Heart right ventricle (tissue), 16 donors: ENCODE measurements at regions of chr1 and their contacts with region 1.

Region 1: DNA sequence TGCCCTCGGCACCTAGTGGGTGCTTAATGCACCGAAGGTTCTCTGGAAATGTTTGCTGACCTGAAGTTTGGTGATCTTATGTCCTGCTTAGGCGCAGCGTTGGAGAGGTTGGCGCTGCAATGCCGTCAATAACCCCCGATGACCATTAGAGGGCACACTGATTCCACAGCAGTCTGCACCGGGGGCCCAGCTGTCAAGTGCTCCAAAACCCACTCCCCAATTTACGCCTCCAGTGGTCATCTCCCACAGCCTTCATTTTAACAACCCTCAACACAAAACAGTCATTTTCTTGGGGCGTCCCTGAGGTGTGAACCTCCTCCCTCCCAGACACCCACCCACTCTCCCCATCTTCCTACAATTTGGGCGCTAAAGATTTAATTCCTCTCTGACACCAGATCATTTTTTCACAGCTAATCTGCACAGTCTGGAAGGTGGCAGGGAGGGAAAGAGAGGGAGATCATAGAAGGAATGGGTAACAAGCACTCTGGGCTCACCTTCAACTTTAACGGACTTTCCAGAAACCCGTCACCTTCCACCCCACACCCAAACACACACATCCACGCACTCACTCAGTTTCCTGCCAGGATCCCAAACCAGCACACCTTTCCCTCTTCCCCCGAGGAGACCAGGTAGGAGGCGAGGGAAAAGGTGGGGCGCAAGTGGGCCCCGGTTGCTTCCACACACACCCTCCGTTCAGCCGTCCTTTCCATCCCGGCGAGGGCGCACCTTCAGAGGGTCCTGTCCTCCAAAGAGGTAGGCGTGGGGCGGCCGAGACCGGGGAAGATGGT is 576 bp upstream of the NPR1 start:
- DNase-seq: peak; percentile 40 to 54
- ATAC-seq: peak; percentile 52 to 87 (median 76)
- H3K4me3 ChIP-seq: peak overlapping the region; percentile 48 to 73 (median 66)
- H3K27ac ChIP-seq: peak overlapping the region; percentile 44 to 85 (median 78)
- H3K4me1 ChIP-seq: peaks cover 8 to 28% (median 22%) of the 10 kb centered on the region in 9 donors
- H3K27me3 ChIP-seq: peaks cover 9 to 41% (median 19%) of the 10 kb centered on the region in 7 donors
- CTCF ChIP-seq: peak; percentile 79 to 96 (median 93)

Region 2: GRCh38 chr1:153768316-153769181 is 90.6 kb after region 1 on chr1:
- intact Hi-C with region 1: loop called in 9 of 10 experiments (anchors 1 to 5 kb)
- DNase-seq: no peak
- ATAC-seq: no peak
- H3K4me3 ChIP-seq: no peak overlapping the region
- H3K27ac ChIP-seq: peak overlapping the region in 5 of 10 donors; percentile 0 to 90 (median 42)
- H3K4me1 ChIP-seq: peaks cover 11 to 64% (median 46%) of the 10 kb centered on the region in 9 donors
- H3K27me3 ChIP-seq: no peaks in the 10 kb centered on the region
- CTCF ChIP-seq: no peak

Region 3: DNA sequence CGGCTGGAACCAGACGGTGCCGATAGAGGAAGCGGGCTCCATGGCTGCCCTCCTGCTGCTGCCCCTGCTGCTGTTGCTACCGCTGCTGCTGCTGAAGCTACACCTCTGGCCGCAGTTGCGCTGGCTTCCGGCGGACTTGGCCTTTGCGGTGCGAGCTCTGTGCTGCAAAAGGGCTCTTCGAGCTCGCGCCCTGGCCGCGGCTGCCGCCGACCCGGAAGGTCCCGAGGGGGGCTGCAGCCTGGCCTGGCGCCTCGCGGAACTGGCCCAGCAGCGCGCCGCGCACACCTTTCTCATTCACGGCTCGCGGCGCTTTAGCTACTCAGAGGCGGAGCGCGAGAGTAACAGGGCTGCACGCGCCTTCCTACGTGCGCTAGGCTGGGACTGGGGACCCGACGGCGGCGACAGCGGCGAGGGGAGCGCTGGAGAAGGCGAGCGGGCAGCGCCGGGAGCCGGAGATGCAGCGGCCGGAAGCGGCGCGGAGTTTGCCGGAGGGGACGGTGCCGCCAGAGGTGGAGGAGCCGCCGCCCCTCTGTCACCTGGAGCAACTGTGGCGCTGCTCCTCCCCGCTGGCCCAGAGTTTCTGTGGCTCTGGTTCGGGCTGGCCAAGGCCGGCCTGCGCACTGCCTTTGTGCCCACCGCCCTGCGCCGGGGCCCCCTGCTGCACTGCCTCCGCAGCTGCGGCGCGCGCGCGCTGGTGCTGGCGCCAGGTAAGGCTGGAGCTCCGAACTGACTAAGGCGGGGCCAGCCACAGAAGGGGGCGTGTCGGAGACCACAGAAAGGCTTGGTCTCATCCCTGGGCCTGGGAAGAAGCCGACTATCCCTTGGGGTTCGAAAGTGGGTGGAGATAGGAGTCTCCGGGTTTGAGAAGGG is 97.8 kb after region 1 on chr1:
- intact Hi-C with region 1: loop called in 8 of 10 experiments (anchors 1 to 5 kb)
- DNase-seq: peak; percentile 71 to 73
- ATAC-seq: peak; percentile 23 to 46 (median 36)
- H3K4me3 ChIP-seq: peak overlapping the region; percentile 54 to 94 (median 85)
- H3K27ac ChIP-seq: peak overlapping the region; percentile 72 to 92 (median 86)
- H3K4me1 ChIP-seq: peaks cover 27 to 92% (median 76%) of the 10 kb centered on the region in 9 donors
- H3K27me3 ChIP-seq: no peaks in the 10 kb centered on the region
- CTCF ChIP-seq: peak in 1 of 9 donors; percentile 7

Region 4: DNA sequence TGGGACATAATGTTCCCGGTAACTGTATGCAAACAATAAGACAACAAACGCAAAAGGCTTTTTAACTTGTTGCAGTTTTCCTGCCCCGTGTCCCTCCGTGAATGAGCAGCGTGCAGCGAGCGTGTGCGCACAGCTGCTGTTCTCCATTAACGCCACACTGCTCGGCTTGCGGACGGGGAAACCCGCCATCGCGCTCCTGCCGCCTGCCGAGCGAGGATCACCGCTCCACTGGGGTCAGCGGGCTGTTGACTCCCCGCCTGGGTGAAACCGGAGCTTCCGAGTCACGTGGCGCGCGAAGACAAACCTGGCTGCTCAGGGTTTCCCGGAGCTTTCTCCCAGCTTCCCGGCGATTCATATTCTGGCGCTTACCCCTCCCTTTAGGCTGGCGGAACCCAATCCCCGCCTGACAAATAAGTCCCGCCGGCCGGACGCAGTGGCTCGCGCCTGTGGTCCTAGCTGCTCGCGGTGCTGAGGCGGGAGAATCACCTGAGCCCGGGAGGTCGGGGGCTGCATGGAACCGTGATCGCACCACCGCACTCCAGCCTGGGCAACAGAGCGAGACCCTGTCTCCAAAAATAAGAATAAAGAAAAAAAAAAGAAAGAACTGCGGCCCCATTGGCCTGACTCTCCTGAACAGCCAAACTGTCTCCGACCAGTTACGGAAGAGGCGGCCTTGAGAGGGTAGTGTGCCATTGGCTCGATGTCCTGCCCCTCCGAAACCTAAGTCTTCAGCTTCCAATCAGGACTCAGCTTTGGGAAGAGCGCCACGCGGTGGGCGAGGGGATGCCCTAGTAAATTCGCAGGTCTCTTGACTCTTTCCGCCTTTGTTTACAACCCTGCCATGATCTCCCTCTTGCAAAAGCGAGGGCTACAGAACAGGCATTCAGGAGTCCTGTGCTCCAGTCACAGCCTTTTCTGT is 289.4 kb after region 1 on chr1 and contains the start of gene CREB3L4:
- intact Hi-C with region 1: no loop called
- DNase-seq: peak; percentile 89 to 94
- ATAC-seq: peak; percentile 85 to 92 (median 88)
- H3K4me3 ChIP-seq: peak within 1 kb of the TSS; percentile 24 to 91 (median 67)
- H3K27ac ChIP-seq: peak within 1 kb of the TSS; percentile 80 to 97 (median 94)
- H3K4me1 ChIP-seq: peaks cover 18 to 52% (median 37%) of the 10 kb centered on the region in 9 donors
- H3K27me3 ChIP-seq: no peaks in the 10 kb centered on the region
- CTCF ChIP-seq: peak in 8 of 9 donors; percentile 27 to 64 (median 42)
- total RNA-seq, gene CREB3L4: 2.9 to 8.5 (median 4.1) TPM